ENCODE measurements at regions of chr7 and their contacts with region 1.

Region 1: GRCh38 chr7:129825496-129826267 is 127.1 kb downstream of the UBE2H start:
- DNase-seq: peak; percentile 90
- ATAC-seq: peak; percentile 63
- H3K4me3 ChIP-seq: peak overlapping the region; percentile 81
- H3K27ac ChIP-seq: peak overlapping the region; percentile 90
- H3K4me1 ChIP-seq: peaks cover 24% of the 10 kb centered on the region
- H3K27me3 ChIP-seq: no peaks in the 10 kb centered on the region
- CTCF ChIP-seq: peak; percentile 34

Region 2: DNA sequence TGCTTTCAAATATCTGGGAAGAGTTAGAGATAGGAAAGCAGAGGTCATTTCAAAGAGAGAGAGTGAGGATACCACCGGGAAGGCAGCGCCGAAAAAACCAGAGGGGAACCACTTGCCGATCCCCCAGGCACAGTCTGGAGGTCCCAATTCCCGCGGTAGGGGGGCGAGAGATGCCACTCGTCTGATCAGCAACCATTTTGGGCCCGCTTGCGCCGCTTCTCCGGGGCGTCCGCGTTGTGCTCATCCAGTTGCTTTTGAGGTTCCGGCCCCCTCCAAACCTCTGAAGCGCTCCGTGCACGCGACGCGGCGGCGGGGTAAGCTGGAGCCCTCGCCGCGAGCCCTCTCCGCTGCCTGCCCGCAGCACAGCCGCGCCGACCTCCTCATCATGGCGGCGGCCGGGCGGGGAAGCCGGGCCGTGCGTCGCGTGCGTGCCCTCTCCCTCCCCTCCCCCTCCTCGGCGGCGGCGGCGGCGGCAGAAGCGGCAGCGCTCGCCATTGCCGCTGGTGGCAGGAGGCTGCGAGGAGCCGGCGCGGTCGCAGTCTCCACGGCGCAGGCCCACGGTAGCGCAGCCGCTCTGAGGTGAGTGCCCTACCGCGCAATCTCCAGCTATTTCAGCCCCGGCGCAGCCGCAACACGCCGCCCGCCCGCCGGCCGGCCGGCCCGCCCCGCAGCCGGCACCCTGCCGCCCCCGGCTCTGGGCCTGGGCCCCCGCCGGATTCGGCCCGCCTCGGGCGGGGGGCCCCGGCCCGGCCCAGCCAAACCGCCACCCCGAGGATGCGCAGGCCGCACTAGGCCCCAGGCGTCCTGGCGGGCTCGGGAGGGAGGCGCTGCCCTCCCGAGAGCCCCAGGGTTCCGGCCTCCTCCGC is 214.2 kb before region 1 on chr7 and contains the start of gene NRF1:
- CTCF ChIA-PET with region 1: interaction called, 6 read pairs
- POLR2A ChIA-PET with region 1: interaction called, 21 read pairs
- intact Hi-C with region 1: no loop called
- DNase-seq: peak; percentile 84
- ATAC-seq: peak; percentile 95
- H3K4me3 ChIP-seq: peak within 1 kb of the TSS; percentile 77
- H3K27ac ChIP-seq: peak within 1 kb of the TSS; percentile 71
- H3K4me1 ChIP-seq: peaks cover 24% of the 10 kb centered on the region
- H3K27me3 ChIP-seq: no peaks in the 10 kb centered on the region
- CTCF ChIP-seq: no peak
- total RNA-seq, gene NRF1: 13.6 and 21.1 TPM in 2 replicates

Region 3: DNA sequence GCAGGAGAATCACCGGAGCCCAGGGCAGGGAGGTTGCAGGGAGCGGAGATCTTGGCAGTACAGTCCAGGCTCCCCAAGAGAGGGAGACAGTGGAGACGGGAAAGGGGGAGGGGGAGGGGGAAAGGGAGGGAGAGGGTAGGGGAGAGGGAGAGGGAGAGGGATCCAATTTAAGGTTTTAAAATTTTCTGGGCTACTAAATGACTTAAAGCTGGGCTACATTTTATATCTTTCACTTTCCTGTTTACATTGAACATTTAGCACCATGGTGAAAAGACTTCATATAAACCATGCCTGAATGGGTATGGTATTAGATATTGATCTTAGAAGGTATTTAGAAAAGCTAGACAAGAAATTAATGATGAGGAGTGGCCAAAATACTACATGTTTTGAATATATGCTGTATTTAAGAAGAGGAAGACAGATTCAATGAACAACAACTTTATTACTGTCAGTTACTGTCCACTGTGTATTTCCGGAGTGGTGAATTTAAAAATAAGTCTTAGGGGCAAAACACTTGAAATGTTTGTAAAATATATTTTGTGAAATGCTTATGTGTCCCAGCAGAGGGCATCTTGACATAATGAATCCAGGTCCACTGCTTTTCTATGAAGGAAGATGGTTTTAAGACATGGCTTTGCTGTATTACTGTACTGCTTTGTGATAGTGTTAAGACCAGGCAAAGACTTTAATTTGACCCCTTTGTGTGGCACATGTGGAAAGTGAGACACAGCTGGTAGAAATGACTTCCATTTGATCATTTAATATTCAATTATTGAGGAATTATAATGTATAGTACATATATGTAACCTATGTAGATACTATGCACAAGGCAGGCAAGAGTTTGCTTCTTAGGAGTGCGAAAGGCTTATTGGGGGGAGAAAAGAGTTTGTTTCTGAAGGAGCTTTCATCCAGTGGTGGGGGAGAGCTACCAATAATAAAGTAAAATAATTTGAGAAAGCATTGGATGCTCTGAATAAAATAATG is 161.4 kb before region 1 on chr7:
- CTCF ChIA-PET with region 1: interaction called, 16 read pairs
- POLR2A ChIA-PET with region 1: no interaction called
- intact Hi-C with region 1: loop called (anchors 1 kb)
- DNase-seq: peak; percentile 68
- ATAC-seq: peak; percentile 76
- H3K4me3 ChIP-seq: no peak overlapping the region
- H3K27ac ChIP-seq: peak overlapping the region; percentile 68
- H3K4me1 ChIP-seq: peaks cover 30% of the 10 kb centered on the region
- H3K27me3 ChIP-seq: no peaks in the 10 kb centered on the region
- CTCF ChIP-seq: peak; percentile 77

Region 4: DNA sequence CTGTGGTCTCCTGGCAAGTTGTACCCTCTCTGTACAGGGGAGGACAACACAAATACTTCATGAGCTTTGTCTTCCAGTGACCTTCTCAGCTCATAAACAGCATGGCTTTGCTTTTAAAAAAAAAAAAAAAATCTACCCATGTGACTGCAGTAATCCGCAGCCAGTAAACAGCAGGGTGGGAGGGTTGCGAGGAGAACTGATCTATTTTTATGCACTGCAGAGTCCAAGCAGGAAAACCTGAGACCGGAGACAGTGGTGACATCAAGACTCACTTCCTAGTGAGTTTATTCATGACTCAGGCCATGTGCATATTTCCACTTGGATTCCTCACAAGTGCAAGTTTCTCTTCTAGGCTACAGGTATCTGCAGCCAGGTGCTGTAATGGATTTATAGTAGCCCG is 86.3 kb before region 1 on chr7:
- CTCF ChIA-PET with region 1: interaction called, 11 read pairs
- POLR2A ChIA-PET with region 1: no interaction called
- intact Hi-C with region 1: loop called (anchors 10 kb)
- DNase-seq: peak; percentile 84
- ATAC-seq: peak; percentile 91
- H3K4me3 ChIP-seq: no peak overlapping the region
- H3K27ac ChIP-seq: peak overlapping the region; percentile 70
- H3K4me1 ChIP-seq: peaks cover 27% of the 10 kb centered on the region
- H3K27me3 ChIP-seq: no peaks in the 10 kb centered on the region
- CTCF ChIP-seq: no peak

Region 5: GRCh38 chr7:129780257-129780973 is 45.3 kb before region 1 on chr7:
- CTCF ChIA-PET with region 1: interaction called, 4 read pairs
- POLR2A ChIA-PET with region 1: interaction called, 4 read pairs
- intact Hi-C with region 1: loop called (anchors 1 kb)
- DNase-seq: peak; percentile 91
- ATAC-seq: peak; percentile 80
- H3K4me3 ChIP-seq: peak overlapping the region; percentile 86
- H3K27ac ChIP-seq: peak overlapping the region; percentile 40
- H3K4me1 ChIP-seq: peaks cover 15% of the 10 kb centered on the region
- H3K27me3 ChIP-seq: no peaks in the 10 kb centered on the region
- CTCF ChIP-seq: no peak

Region 6: GRCh38 chr7:129845178-129845971 is 19.7 kb after region 1 on chr7:
- CTCF ChIA-PET with region 1: no interaction called
- POLR2A ChIA-PET with region 1: no interaction called
- intact Hi-C with region 1: loop called (anchors 2 kb)
- DNase-seq: peak; percentile 68
- ATAC-seq: peak; percentile 53
- H3K4me3 ChIP-seq: peak overlapping the region; percentile 26; the same call in 1 of the 2 replicates
- H3K27ac ChIP-seq: peak overlapping the region; percentile 94
- H3K4me1 ChIP-seq: peaks cover 35% of the 10 kb centered on the region
- H3K27me3 ChIP-seq: no peaks in the 10 kb centered on the region
- CTCF ChIP-seq: no peak

Region 7: DNA sequence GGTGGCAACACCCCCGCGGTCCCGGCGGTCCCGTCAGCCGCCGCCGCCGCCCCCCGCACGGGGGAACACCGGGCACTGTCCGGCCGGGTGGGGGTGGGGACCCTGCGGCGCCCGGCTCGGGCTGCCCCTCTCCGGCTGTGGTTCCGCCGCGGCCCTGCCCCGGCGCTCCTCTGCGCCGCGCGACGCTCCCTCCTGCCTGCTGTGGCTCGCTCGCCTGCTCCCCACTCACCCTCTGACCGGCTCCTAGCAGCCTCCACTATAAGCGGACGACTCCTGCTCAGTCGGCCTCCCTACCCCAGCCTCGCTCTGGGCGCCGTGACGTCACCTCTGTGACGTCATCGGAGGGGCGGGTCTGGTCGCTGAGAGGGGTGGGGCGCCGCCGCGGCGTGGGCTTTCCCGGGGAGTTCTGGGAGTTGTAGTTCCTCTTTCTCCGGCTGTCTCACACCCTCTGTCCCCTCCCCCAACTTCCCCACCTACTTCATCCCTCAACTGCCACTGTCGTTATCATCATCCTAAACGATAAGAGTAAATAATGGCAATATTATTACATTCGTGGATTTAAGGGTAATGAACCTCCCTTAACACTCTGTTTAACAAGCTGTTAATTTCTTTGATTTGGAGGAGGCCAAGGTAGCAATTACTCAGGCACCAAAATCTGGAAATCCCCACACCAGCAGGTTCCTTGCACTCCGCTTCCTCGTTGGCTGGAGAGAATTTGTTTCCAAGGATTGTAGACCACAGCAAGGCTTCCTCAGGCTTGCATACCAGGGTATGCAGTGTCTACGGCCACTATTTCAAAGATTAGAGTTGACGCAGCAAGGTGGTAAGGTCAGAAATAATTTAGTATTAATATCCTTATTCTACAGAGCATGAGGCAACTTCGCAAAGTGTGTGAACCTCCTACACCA is 127.2 kb after region 1 on chr7 and contains the start of gene UBE2H:
- CTCF ChIA-PET with region 1: interaction called, 6 read pairs
- POLR2A ChIA-PET with region 1: interaction called, 3 read pairs
- intact Hi-C with region 1: loop called (anchors 1 kb)
- DNase-seq: peak; percentile 93
- ATAC-seq: peak; percentile 38
- H3K4me3 ChIP-seq: peak within 1 kb of the TSS; percentile 95
- H3K27ac ChIP-seq: peak within 1 kb of the TSS; percentile 95
- H3K4me1 ChIP-seq: peaks cover 37% of the 10 kb centered on the region
- H3K27me3 ChIP-seq: no peaks in the 10 kb centered on the region
- CTCF ChIP-seq: no peak
- total RNA-seq, gene UBE2H: 62.5 and 102 TPM in 2 replicates